Activated T-helper 2 cell treated with anti-CD3 and anti-CD28 coated beads, Interferon-gamma antibody, Interleukin-2, Interleukin-4, amounts not matched to agents 10 μg/mL and 5 μg/mL and 100 μg/mL, durations not matched to agents 14 hours and 24 hours and 36 hours (primary cell): ENCODE measurements at regions of chr2 and their contacts with region 1.

Region 1: GRCh38 chr2:224927646-224928173 is 114.6 kb downstream of the DOCK10 start:
- DNase-seq: peak; percentile 64
- H3K4me3 Mint-ChIP-seq: peak overlapping the region; percentile 46
- H3K27ac Mint-ChIP-seq: peak overlapping the region; percentile 99
- H3K4me1 Mint-ChIP-seq: peaks cover 93% of the 10 kb centered on the region
- H3K27me3 Mint-ChIP-seq: no peaks in the 10 kb centered on the region

Region 2: GRCh38 chr2:223957092-223957851 is 970.4 kb before region 1 on chr2 and contains the start of gene MRPL44:
- intact Hi-C with region 1: loop called (anchors 5 kb)
- DNase-seq: peak; percentile 96
- H3K4me3 Mint-ChIP-seq: peak within 1 kb of the TSS; percentile 89
- H3K27ac Mint-ChIP-seq: peak within 1 kb of the TSS; percentile 87
- H3K4me1 Mint-ChIP-seq: peaks cover 71% of the 10 kb centered on the region
- H3K27me3 Mint-ChIP-seq: no peaks in the 10 kb centered on the region
- total RNA-seq, gene MRPL44: 33.6 and 34.3 TPM in 2 replicates

Region 3: DNA sequence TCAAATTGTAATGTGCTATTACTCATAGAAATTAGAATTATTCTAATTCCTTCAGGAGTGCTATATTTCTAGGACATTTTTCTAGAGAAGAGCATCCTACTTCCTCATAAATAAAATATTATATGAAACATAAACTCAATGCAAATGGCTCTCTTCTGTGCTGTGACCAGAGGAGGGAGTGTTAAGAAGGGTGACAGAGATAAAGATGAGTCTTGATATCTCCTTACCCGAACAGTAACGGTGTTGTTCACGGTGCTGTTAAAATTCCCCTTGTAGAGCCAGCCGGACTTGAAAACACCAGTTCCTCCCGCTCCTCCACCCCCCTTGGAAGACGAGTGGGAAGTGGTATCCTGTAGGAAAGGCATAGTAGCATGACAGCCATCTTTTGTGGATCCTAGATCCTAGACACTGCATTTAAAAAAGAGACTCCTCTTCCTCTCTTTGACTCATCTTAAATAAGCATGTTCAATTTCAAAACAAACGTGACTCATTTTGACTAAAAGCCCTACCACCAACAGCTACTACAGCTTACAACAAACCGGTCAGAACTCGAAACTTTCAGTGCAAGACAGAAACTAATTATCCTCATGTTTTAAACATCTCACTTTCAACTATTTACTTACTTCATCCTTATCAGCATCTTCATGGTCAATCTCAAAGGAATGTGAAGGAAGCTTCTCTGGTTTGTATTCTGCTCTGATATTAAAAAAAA is 41.7 kb before region 1 on chr2:
- intact Hi-C with region 1: loop called (anchors 1 kb)
- DNase-seq: no peak
- H3K4me3 Mint-ChIP-seq: no peak overlapping the region
- H3K27ac Mint-ChIP-seq: peak overlapping the region; percentile 88
- H3K4me1 Mint-ChIP-seq: peaks cover 61% of the 10 kb centered on the region
- H3K27me3 Mint-ChIP-seq: no peaks in the 10 kb centered on the region

Region 4: DNA sequence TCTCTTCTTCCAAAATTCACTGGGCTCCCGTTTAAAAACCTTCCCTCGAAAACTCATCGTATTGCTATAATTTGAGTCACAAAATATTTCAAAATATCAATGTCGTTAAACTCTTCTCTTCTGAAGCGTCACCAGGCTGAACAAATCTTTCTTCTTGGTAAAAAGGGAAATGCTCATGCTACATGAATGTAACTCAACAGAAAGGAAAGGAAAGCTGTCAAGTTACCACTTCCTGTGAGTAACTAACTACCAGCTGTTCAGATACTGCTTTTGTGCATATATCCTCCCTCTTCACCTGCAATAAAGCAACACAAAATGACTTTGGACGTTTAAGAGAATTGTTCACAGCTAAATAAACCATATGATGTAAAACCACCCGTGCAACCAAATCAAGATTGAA is 19.2 kb after region 1 on chr2:
- intact Hi-C with region 1: loop called (anchors 1 kb)
- DNase-seq: no peak
- H3K4me3 Mint-ChIP-seq: peak overlapping the region; percentile 87
- H3K27ac Mint-ChIP-seq: peak overlapping the region; percentile 86
- H3K4me1 Mint-ChIP-seq: peaks cover 75% of the 10 kb centered on the region
- H3K27me3 Mint-ChIP-seq: no peaks in the 10 kb centered on the region

Region 5: GRCh38 chr2:224987733-224988132 is 60.0 kb after region 1 on chr2:
- intact Hi-C with region 1: no loop called
- DNase-seq: no peak
- H3K4me3 Mint-ChIP-seq: no peak overlapping the region
- H3K27ac Mint-ChIP-seq: no peak overlapping the region
- H3K4me1 Mint-ChIP-seq: peaks cover 79% of the 10 kb centered on the region
- H3K27me3 Mint-ChIP-seq: no peaks in the 10 kb centered on the region

Region 6: DNA sequence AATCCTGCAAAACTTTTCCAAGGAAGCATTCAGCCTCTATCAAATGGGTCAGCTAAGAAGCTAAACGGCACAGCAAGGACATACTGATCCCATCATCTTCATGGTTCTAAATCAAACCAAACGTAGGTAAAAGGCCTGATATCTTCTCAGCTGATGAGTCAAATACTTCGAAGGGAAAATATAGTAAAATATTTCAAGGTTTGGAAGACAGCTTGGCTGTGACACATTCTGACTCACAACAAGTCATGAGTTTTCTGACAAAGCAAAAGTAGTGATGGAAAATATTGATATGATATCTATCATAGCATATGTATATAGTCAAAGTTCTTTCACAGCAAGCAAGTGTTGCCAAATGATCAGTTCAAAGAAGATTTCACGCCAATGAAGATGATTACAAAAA is 83.1 kb after region 1 on chr2:
- intact Hi-C with region 1: loop called (anchors 1 kb)
- DNase-seq: no peak
- H3K4me3 Mint-ChIP-seq: no peak overlapping the region
- H3K27ac Mint-ChIP-seq: peak overlapping the region; percentile 82
- H3K4me1 Mint-ChIP-seq: peaks cover 73% of the 10 kb centered on the region
- H3K27me3 Mint-ChIP-seq: no peaks in the 10 kb centered on the region

Region 7: DNA sequence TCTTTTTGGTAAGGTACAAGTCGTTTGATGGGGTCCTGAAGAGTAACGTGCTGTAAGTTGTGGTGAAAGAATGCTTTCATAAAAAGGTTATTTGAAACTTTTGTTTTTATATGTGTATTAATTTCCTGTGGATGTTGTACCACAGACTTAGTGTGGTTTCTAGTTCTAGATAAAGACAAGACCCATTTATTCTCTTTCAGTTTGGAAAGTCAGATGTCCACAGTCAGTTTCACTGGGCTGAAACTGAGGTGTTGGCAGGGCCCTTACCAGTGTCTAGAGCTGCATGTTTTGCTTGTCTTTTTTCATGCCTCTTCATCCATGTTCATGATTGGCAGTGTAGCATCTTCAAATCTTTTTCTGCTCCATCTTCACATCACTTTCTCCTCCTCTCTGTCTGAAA is 136.7 kb after region 1 on chr2:
- intact Hi-C with region 1: loop called (anchors 1 kb)
- DNase-seq: no peak
- H3K4me3 Mint-ChIP-seq: no peak overlapping the region
- H3K27ac Mint-ChIP-seq: peak overlapping the region; percentile 69
- H3K4me1 Mint-ChIP-seq: peaks cover 43% of the 10 kb centered on the region
- H3K27me3 Mint-ChIP-seq: no peaks in the 10 kb centered on the region